ENCODE measurements at regions of chr17 and their contacts with region 1.

Region 1: DNA sequence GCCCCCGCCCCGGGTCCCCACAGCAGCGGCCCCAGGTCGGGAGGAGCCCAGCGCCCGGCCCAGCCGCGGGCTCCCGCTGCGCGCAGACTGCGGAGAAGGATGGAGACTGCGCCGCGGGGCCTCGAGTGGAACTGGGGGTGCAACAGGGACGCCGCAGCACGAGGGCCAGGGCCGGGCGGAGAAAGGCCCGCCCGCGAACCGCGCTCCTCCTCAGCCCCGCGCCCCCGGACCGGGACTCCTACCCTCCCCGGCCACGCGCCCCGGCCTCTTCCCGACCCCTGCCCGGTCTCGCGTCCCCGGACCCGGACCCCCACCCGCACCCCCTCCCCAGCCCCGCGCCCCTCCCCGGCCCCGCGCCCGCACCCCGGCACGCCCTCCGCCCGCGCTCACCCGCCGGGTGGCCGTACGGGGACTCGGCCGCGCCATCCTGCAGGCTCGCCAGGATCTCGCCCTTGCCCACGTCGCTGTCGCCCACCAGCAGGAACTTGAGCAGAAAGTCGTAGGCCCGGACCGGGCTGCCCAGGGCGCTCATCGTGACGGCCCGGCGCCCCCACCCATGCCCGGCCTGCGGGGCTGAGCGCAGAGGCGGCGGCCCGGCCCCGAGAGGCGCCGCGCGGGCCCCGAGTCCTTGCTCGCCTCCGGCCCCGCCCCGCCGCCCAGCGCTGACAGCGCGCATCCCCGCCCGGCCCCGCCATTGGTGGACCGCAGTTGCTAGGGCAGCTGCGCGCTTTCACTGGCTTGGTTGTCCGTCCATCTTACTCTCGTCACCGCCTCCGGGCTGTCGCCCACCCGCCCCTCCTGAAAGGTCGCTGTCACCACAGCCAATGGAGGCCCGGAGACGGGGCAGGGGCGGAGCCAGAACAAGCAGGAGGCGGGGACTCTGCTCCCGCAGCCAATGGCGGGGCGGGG is at the start of gene RAB40B:
- DNase-seq: peak; percentile 99
- H3K4me3 Mint-ChIP-seq: peak within 1 kb of the TSS; percentile 71
- H3K27ac Mint-ChIP-seq: no peak within 1 kb of the TSS
- H3K4me1 Mint-ChIP-seq: peaks cover 8% of the 10 kb centered on the region
- H3K27me3 Mint-ChIP-seq: no peaks in the 10 kb centered on the region
- total RNA-seq, gene RAB40B: 1.4 to 1.9 TPM

Region 2: DNA sequence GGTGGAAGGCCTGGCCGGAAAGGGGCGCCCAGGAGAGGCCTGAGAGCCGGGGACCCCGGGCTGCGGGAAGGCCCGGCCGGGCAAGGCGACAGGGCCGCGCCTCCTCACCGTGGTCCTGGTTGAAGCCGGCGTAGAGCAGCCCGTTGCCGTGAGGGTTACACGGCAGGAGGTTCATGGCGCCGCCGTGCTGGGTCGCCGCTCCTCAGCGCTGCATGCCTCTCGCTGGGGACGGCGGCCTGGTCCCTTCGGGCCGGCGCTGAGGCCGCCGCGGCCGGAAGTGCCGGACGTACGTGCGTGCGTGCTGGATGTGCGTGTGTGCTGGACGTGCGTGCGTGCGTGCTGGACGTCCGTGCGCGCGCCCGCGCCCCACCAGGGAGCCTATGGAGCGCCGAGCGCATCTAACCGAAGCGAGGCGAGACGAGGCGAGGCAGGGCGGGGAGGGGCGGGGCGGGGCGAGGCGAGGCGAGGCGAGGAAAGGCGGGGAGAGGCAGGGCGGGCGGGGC is 50.1 kb before region 1 on chr17 and contains the start of gene WDR45B:
- CTCF ChIA-PET with region 1: no interaction called
- POLR2A ChIA-PET with region 1: no interaction called
- intact Hi-C with region 1: loop called (anchors 5 kb)
- DNase-seq: peak; percentile 94
- H3K4me3 Mint-ChIP-seq: peak within 1 kb of the TSS; percentile 82
- H3K27ac Mint-ChIP-seq: peak within 1 kb of the TSS; percentile 73
- H3K4me1 Mint-ChIP-seq: peaks cover 25% of the 10 kb centered on the region
- H3K27me3 Mint-ChIP-seq: no peaks in the 10 kb centered on the region
- total RNA-seq, gene WDR45B: 42.8 to 43.0 TPM

Region 3: DNA sequence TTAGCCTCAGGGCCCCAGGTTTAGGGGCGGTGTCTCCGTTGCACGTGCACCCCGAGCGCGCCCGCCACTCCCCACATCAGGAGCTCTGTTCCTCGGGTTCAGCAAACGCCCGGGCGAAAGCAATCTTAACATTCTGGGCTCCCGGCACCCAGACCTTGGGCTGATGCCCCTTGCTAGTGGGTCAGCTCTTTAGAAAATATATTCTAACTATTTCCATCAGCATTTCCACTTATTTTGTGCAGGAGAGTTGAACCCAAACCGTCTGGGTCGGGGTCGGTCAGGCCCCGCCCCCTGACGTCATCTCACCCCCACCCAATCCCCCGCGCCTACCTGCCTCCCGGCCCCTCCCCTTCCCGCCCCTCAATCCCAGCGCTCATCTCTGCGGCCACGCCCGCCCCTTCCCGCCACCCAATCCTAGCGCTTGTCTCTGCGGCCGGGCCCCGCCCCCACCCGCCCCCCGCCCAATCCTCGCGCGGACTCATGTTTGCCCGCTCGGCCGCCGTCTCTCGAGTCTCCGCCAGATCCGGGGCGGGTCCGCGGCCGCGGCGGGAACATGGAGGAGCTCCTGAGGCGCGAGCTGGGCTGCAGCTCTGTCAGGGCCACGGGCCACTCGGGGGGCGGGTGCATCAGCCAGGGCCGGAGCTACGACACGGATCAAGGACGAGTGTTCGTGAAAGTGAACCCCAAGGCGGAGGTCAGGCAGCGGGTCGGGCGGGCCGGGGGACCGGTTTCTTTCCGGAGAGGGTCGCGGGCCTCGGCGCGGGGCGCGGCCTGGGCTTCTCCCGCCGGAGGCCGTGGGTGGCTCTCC is 18.1 kb after region 1 on chr17 and contains the start of gene FN3KRP:
- CTCF ChIA-PET with region 1: no interaction called
- POLR2A ChIA-PET with region 1: no interaction called
- intact Hi-C with region 1: loop called (anchors 1 kb)
- DNase-seq: peak; percentile 93
- H3K4me3 Mint-ChIP-seq: peak within 1 kb of the TSS; percentile 90
- H3K27ac Mint-ChIP-seq: peak within 1 kb of the TSS; percentile 82
- H3K4me1 Mint-ChIP-seq: peaks cover 19% of the 10 kb centered on the region
- H3K27me3 Mint-ChIP-seq: no peaks in the 10 kb centered on the region
- total RNA-seq, gene FN3KRP: 36.7 to 40.5 TPM

Region 4: DNA sequence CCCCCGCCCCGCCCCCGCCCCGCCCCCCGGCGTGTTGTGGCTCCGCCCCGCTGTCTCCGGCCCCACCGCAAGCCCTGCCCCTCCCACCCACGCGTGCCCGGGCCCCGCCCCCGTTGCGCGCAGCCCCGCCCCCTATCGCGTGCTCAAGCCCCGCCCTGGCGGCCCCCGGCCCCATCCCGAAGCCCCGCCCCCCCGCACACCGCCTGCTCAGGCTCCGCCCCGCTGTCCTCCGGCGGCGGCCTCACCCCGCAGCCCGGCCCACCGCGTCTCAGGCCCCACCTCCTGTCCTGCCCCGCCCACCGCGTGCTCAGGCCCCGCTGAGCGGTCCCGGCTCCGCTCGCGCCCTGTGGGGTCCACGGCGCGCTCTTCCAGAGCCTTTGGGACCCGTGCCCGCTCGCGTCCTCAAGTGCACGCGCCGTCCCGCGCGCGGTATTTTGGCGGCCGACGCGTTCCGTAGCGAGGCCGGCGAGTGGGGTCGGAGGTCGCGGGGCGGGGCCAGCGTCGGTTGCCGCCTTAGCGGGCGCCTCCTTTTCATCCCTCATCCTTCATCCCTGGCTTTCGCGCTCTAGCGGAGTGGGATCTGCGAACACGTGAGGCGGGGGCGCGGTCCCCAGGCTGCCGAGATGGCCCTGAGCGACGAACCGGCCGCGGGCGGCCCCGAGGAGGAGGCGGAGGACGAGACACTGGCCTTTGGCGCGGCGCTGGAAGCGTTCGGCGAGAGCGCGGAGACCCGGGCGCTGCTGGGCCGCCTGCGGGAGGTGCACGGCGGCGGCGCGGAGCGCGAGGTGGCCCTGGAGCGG is 53.5 kb after region 1 on chr17 and contains the start of gene TBCD:
- CTCF ChIA-PET with region 1: no interaction called
- POLR2A ChIA-PET with region 1: no interaction called
- intact Hi-C with region 1: loop called (anchors 1 kb)
- DNase-seq: peak; percentile 94
- H3K4me3 Mint-ChIP-seq: peak within 1 kb of the TSS; percentile 78
- H3K27ac Mint-ChIP-seq: peak within 1 kb of the TSS; percentile 18
- H3K4me1 Mint-ChIP-seq: peaks cover 24% of the 10 kb centered on the region
- H3K27me3 Mint-ChIP-seq: no peaks in the 10 kb centered on the region
- total RNA-seq, gene TBCD: 97.0 to 98.2 TPM